Posterior cingulate gyrus (tissue), 11 donors: ENCODE measurements at regions of chr14 and their contacts with region 1.

Region 1: GRCh38 chr14:64303471-64303917 is 9.3 kb upstream of the ESR2 start:
- DNase-seq: no peak

Region 2: DNA sequence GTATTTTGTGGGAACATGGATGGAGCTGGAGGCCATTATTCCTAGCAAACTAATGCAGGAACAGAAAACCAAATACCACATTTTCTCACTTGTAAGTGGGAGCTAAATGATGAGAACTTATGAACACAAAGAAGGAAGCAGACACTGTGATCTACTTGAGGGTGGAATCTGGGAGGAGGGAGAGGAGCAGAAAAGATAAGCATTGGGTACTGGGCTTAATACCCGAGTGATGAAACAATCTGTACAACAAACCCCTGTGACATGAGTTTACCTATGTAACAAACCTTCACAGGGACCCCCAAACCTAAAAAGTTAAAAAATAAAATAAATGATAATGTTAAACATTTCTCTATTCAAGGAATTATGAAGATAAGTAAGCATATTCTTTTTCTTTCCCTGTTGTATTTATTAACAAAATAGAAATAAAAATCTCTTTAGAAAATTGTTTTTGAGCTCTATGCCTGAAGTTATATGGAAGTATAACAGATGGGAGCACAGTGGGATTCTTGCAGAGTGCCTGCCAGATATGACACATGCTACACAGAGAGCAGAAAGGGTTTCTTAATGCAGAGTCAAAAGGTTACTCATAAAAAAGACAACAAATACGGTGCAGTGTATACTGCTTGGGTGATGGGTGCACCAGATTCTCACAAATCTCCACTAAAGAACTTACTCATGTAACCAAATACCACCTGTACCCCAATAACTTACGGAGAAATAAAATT is 502.7 kb before region 1 on chr14:
- intact Hi-C with region 1: loop called (anchors 2 kb)
- DNase-seq: no peak

Region 3: GRCh38 chr14:64220466-64220865 is 83.0 kb before region 1 on chr14:
- intact Hi-C with region 1: no loop called
- DNase-seq: peak in 9 of 10 donors; percentile 29 to 96 (median 79)

Region 4: DNA sequence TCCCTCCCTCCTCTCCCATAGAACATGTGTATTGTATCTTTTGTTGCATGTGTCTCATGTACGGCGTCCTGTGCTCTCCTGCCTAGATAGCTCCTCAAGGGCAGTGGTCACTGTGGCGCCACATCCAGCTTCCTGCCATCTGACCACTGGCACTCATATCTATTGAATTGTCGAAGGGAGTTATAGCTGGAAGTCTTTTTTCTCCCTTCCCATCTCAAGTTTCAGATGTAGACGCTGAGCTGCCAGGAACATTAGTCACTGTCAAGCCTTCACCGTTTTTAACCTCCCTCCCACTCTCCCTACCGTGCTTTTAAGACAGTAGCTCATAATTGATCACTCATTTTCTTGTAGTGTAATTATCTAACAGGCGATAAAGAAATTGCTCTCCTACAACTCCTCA is 117.7 kb after region 1 on chr14:
- intact Hi-C with region 1: no loop called
- DNase-seq: no peak